ENCODE measurements at regions of chr5 and their contacts with region 1.

Region 1: GRCh38 chr5:81971712-81972495 is at the start of gene ATG10:
- DNase-seq: peak; percentile 86
- H3K4me3 Mint-ChIP-seq: peak within 1 kb of the TSS; percentile 87
- H3K27ac Mint-ChIP-seq: peak within 1 kb of the TSS; percentile 99
- H3K4me1 Mint-ChIP-seq: peaks cover 31% of the 10 kb centered on the region
- H3K27me3 Mint-ChIP-seq: no peaks in the 10 kb centered on the region
- total RNA-seq, gene ATG10: 7.7 and 8.9 TPM in 2 replicates

Region 2: GRCh38 chr5:81420039-81420667 is 551.8 kb before region 1 on chr5:
- intact Hi-C with region 1: loop called (anchors 5 kb)
- DNase-seq: no peak
- H3K4me3 Mint-ChIP-seq: no peak overlapping the region
- H3K27ac Mint-ChIP-seq: peak overlapping the region; percentile 83
- H3K4me1 Mint-ChIP-seq: peaks cover 35% of the 10 kb centered on the region
- H3K27me3 Mint-ChIP-seq: no peaks in the 10 kb centered on the region

Region 3: DNA sequence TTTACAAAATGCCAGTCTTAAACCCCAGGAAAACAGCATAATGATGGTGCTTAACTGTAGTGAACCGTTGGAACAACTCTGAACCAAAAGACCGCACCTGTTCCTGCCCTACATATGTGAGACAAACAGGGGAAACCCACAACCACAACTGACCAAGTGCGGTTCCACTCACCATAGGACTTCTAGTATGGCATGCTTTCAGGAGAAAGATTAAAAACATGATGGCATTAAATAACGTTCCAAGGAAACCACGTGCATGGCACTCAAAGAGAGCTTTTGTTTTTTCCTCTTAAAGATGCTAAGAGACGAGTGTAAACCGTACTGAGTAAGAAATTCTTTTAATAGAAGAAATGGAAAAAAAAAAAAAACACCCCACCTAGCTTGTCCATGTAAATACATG is 340.8 kb before region 1 on chr5:
- intact Hi-C with region 1: loop called (anchors 5 kb)
- DNase-seq: peak; percentile 42
- H3K4me3 Mint-ChIP-seq: no peak overlapping the region
- H3K27ac Mint-ChIP-seq: no peak overlapping the region
- H3K4me1 Mint-ChIP-seq: peaks cover 17% of the 10 kb centered on the region
- H3K27me3 Mint-ChIP-seq: no peaks in the 10 kb centered on the region

Region 4: GRCh38 chr5:81851481-81852178 is 120.3 kb before region 1 on chr5:
- intact Hi-C with region 1: loop called (anchors 1 kb)
- DNase-seq: peak; percentile 88
- H3K4me3 Mint-ChIP-seq: peak overlapping the region; percentile 85
- H3K27ac Mint-ChIP-seq: peak overlapping the region; percentile 94
- H3K4me1 Mint-ChIP-seq: peaks cover 38% of the 10 kb centered on the region
- H3K27me3 Mint-ChIP-seq: no peaks in the 10 kb centered on the region

Region 5: DNA sequence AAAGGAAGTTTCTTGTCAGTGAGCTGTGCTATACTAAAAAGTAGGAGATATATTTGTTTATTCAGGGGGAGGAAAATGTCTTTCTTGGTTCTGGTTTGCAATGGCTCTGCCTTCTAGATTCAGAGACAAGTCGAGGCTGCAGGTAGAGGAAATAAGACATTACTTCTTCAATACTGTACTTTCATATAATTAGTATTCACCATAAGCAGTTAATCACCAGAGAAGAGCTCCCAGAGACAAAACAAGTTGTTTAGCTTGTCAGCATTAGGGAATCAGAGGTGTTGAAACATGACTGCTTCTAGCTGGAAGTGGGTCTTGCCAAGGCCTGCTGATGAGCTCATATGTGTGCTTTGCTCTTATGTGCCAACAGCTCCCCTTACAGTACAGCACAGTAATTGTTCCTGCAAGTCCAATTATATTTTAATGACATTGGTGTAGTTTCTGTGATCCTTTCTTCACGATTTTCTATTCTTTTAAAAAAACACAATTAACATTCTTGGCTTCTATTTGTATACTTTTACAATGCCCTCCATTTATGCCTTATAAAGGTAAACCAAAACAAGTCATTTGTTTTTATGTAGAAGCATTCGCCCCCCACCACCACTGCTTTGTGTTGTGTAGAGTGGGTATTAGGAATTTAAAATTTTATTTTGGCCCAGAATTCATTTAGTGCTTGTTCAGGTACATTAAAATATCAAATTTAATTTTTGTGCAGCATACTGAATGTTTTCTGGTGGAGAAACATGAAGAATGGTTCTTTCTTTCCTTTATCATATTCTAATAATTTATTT is 194.0 kb after region 1 on chr5:
- intact Hi-C with region 1: loop called (anchors 5 kb)
- DNase-seq: no peak
- H3K4me3 Mint-ChIP-seq: no peak overlapping the region
- H3K27ac Mint-ChIP-seq: no peak overlapping the region
- H3K4me1 Mint-ChIP-seq: peaks cover 7% of the 10 kb centered on the region
- H3K27me3 Mint-ChIP-seq: no peaks in the 10 kb centered on the region

Region 6: GRCh38 chr5:82295144-82295543 is 323.2 kb after region 1 on chr5:
- intact Hi-C with region 1: no loop called
- DNase-seq: no peak
- H3K4me3 Mint-ChIP-seq: no peak overlapping the region
- H3K27ac Mint-ChIP-seq: no peak overlapping the region
- H3K4me1 Mint-ChIP-seq: peaks cover 1% of the 10 kb centered on the region
- H3K27me3 Mint-ChIP-seq: no peaks in the 10 kb centered on the region

Region 7: DNA sequence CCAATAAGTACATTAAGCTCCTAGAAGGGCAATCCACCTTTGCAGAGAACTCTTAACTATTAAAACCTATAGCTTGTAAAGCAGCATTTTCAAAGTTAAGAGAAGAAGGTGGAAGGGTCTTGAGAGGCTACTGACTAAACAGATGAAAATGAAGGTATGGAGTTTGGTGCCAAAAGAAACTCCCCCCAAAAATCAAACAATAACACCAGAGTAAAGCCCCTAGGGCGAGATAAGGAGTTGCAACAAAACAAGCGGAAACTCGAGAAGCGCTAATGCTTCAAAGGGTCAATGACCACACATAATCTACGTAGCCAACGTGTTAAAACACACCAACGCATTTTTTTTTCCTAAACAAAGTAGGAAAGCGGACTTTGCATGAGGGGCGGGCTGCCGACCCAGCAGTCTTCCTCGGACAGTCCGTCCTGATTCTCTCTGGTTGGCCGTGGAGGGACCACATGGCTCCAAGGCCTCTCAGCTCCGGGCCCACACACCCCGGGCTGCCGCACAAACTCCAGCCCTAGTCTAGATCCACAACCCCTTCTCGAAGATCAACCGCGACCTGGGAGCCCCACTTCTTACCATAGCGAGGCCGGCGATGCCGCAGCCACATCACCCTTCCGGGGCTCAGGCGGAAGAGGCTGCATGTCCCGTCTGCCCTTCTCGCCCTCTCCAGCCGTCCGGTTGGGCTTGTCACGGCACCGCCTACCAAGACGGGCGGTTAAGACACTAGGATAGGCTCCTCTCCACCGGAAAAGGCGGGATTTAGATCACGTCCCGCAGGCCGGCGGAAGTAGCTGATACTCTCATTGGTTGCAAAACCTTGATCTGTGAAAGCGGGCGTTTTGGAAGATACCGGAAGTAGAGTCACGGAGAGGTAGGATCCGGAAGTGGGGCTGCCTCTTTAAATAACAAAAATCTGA is 1105.1 kb after region 1 on chr5 and contains the starts of genes TMEM167A and XRCC4:
- intact Hi-C with region 1: loop called (anchors 5 kb)
- DNase-seq: peak; percentile 93
- H3K4me3 Mint-ChIP-seq: peak within 1 kb of the TSS; percentile 97
- H3K27ac Mint-ChIP-seq: peak within 1 kb of the TSS; percentile 96
- H3K4me1 Mint-ChIP-seq: peaks cover 41% of the 10 kb centered on the region
- H3K27me3 Mint-ChIP-seq: no peaks in the 10 kb centered on the region
- total RNA-seq, gene TMEM167A: 67.7 and 70.9 TPM in 2 replicates
- total RNA-seq, gene XRCC4: 10.5 and 10.7 TPM in 2 replicates